ENCODE measurements at regions of chr5 and their contacts with region 1.

Region 1: GRCh38 chr5:67693956-67694809 is 497.6 kb upstream of the CD180 start:
- DNase-seq: peak; percentile 80 to 92
- ATAC-seq: peak; percentile 95 to 100 (median 98)
- H3K4me3 ChIP-seq: peak overlapping the region; percentile 50
- H3K27ac ChIP-seq: peak overlapping the region; percentile 82
- H3K4me1 ChIP-seq: peaks cover 13% of the 10 kb centered on the region
- H3K27me3 ChIP-seq: no peaks in the 10 kb centered on the region
- CTCF ChIP-seq: no peak

Region 2: DNA sequence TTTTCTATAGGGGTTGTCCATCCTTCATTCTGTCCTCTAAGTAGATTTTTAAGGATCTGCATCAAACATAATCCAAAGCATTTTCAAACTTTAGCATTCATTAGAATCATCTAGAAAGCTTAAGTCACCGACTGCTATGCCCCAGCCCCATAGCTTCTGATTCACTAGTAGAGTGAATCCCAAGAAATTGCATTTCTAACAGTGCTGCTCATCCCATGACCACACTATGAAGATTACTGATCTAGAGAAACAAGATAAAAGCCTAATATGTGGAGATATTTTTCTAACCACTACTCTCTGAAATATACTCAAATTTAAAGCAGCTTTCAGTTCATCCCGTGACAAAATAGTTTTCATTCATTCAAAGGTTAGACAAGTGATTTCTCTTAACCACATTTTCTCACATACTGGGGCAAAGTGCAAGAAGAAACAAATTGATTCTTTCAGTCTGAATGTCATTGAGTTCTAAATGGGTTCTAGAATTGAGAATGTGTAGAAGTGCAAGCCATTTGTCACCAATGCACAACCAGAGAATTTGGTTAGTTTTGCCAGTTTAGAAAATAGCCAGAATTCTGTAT is 210.6 kb before region 1 on chr5:
- intact Hi-C with region 1: loop called in 1 of 2 experiments (anchors 10 kb)
- DNase-seq: no peak
- ATAC-seq: no peak
- H3K4me3 ChIP-seq: no peak overlapping the region
- H3K27ac ChIP-seq: no peak overlapping the region
- H3K4me1 ChIP-seq: no peaks in the 10 kb centered on the region
- H3K27me3 ChIP-seq: no peaks in the 10 kb centered on the region
- CTCF ChIP-seq: no peak

Region 3: GRCh38 chr5:67792891-67793290 is 98.7 kb after region 1 on chr5:
- intact Hi-C with region 1: no loop called
- DNase-seq: peak; percentile 68 to 75
- ATAC-seq: peak in 2 of 4 donors; percentile 54 to 63
- H3K4me3 ChIP-seq: no peak overlapping the region
- H3K27ac ChIP-seq: no peak overlapping the region
- H3K4me1 ChIP-seq: no peaks in the 10 kb centered on the region
- H3K27me3 ChIP-seq: no peaks in the 10 kb centered on the region
- CTCF ChIP-seq: no peak

Region 4: DNA sequence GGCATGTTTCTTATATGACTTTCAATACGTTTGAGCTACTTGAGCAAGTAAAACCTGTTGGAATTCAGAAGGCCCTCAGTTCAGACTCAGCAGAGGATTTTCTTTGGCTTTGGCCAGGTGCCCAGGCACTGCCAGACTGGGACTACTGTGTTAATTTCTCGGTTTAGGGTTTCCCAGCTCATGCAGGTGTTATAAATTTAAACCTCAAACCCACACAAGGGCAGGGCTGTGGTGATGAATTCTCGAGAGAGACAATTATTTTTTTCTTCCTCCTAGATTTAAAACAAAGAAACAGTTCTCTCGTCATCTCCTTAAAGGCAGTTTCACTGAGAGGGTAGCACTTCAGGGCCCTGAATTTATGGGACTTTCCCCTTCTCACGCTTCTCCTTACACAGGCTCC is 115.4 kb after region 1 on chr5:
- intact Hi-C with region 1: loop called in 1 of 2 experiments (anchors 10 kb)
- DNase-seq: no peak
- ATAC-seq: no peak
- H3K4me3 ChIP-seq: no peak overlapping the region
- H3K27ac ChIP-seq: peak overlapping the region; percentile 88
- H3K4me1 ChIP-seq: peaks cover 37% of the 10 kb centered on the region
- H3K27me3 ChIP-seq: no peaks in the 10 kb centered on the region
- CTCF ChIP-seq: no peak

Region 5: DNA sequence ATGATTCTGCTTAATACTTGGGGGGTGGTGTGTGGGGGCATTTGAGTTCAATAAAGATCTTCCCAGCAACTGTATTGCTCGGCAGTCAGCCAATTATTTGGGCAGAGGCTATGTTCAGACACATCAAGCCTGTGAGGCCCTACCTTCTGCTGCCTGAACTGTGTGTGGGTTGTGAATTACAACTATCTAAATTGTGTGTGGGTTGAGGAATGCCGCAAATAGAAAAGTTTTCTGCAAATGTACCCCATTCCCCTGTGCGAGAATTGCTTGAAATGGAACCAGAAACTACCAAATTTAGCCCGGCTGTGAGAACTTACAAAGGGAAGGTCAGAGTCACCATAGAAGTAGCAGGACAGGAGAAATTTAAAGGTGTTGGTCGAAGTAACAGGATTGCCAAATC is 161.3 kb after region 1 on chr5:
- intact Hi-C with region 1: no loop called
- DNase-seq: no peak
- ATAC-seq: no peak
- H3K4me3 ChIP-seq: no peak overlapping the region
- H3K27ac ChIP-seq: no peak overlapping the region
- H3K4me1 ChIP-seq: no peaks in the 10 kb centered on the region
- H3K27me3 ChIP-seq: no peaks in the 10 kb centered on the region
- CTCF ChIP-seq: no peak

Region 6: DNA sequence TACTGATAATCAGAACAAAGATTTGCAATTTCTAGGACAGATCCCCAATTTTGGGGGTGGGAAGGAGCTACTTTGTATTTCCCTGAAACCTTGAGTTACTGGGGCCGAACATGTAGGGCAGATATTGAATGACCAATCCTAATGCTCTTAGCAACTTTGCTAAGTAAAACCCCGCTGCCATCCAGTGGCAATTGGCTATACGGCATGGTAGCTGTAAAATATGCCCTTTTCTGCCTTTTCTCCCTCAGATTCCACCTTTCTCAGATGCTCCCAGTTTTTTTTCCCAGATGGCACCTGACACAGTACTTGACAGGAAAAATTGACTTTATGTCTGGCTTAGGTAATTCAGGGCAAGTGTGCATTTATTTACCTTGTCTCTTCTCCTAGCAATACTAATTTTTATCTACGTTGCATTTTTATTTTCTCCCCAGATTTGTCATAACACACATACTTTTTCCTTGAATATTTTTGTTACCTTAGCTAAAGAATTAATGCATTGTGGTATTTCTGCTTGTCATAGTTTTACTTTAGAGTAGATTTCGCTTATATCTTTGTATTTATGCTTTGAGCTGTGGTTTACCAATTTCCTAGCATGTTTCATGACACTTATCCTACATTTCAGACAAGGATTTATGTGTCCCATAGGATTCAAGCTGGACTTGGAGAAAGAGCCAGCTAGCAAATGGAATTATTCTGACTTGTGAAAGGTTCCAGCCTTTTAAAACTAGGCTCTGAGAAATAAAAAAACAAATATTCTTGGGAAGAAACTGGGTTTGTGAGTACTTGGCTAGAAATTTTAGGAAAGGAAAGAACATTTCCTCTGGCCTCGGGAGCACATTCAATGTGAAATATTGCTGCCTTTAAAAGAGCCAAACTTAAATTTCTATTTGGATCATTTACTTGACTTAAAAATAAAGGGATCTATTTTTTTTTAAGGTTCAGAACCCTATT is 558.8 kb after region 1 on chr5:
- intact Hi-C with region 1: loop called in 1 of 2 experiments (anchors 10 kb)
- DNase-seq: peak; percentile 32 to 60
- ATAC-seq: peak; percentile 80 to 86 (median 83)
- H3K4me3 ChIP-seq: peak overlapping the region; percentile 46
- H3K27ac ChIP-seq: peak overlapping the region; percentile 72
- H3K4me1 ChIP-seq: peaks cover 94% of the 10 kb centered on the region
- H3K27me3 ChIP-seq: no peaks in the 10 kb centered on the region
- CTCF ChIP-seq: peak; percentile 86